ENCODE measurements at regions of chr3 and their contacts with region 1.

Region 1: DNA sequence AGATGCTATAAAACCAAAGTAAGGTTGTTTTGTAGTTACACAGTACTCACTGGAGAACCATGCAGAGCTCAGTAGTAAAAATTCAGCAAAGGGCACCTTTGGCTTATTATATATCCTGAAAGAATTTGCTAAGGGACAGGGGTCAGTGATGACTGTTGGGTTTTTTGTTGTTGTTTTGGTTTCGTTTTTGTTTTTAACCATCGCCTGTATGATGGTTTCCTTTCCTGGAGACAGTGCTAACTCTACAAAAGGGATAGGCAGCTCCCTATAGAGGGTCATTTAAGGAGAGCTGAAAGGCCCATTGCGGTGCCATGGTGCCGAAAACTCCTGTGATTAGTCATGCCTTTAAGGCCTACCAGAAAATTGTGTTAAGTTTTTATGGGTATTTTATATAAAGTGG is 118.2 kb upstream of the GOLIM4 start:
- DNase-seq: no peak
- ATAC-seq: no peak

Region 2: DNA sequence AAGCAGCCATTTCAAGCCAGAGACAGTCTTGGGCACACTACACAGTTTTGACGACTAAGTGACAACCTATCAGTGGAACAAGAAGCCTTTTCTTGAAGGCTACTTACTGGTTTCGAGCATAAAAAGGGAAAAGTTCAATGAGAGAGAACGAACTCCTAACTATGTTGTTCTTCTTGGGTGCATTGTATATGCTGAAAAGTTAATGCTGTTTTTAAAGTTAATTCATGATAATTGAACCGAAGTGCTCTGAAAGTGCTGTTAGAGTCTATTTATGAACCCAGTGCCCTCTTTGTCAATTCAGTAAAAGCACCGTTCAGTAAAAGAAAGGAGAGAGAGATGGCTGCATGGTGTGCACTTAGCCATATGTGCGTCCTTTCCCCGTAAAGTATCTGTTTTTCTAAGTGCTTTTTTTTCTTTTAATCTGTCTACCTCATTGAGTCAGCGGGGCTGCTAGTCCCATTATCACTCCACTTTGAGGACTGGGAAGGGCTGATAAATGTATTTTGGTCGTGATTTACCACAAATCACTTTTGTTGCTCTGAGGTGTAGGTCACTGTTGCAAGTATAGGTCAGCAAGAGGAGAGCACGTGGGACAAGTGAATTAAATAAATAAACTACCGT is 262.6 kb after region 1 on chr3:
- intact Hi-C with region 1: loop called in 1 of 2 experiments (anchors 10 kb)
- DNase-seq: no peak
- ATAC-seq: no peak

Region 3: GRCh38 chr3:168847291-168847883 is 633.5 kb after region 1 on chr3:
- intact Hi-C with region 1: loop called in 1 of 2 experiments (anchors 10 kb)
- DNase-seq: no peak
- ATAC-seq: peak; percentile 59